Endothelial cell of umbilical vein (primary cell): ENCODE measurements at regions of chr13 and their contacts with region 1.

Region 1: DNA sequence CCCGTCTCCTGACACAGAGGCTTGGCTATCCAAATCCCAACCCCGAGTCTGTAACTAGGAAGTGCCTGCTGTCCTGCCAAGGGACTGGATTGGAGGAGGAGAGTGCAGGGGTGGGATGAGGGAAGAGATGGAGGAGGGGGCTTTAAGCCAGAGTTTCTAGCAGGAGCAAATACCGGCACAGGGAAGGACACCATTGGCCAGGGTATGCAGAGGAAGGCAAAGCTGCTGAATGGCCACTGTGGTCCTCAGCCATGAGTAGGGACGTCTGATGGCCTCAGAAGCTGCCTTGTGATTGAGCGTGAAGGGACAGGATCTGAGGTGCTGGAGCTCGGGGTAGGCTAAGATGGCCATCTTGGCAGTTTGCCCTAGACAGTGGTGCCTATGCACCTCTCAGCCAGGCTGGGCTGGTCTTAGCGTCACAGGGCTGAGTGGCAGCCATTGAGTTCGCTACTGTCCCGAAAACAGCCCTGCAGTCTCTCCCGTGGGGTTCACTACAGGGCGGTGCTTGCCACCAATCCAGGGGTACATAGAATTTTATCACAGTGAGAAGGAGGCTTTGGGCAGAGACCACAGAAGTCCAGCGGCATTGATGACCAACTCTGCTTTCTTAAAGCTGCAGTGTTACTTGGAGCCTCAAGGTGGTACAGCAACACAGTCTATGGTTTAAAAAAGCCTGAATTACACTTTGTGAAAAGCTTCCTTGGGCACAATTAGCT is 61.8 kb downstream of the AKAP11 start:
- DNase-seq: peak; percentile 21
- H3K4me3 ChIP-seq: no peak overlapping the region
- H3K27ac ChIP-seq: no peak overlapping the region
- H3K4me1 ChIP-seq: no peaks in the 10 kb centered on the region
- H3K27me3 ChIP-seq: peaks cover 2 to 3% of the 10 kb centered on the region in 2 experiments
- CTCF ChIP-seq: peak; percentile 25 to 36
- POLR2A ChIP-seq: no peak

Region 2: GRCh38 chr13:42039946-42040729 is 293.6 kb before region 1 on chr13:
- CTCF ChIA-PET with region 1: no interaction called
- POLR2A ChIA-PET with region 1: no interaction called
- dilution Hi-C with region 1: no loop called
- intact Hi-C with region 1: no loop called
- DNase-seq: peak; percentile 83
- H3K4me3 ChIP-seq: peak overlapping the region; percentile 60 to 85 (median 69)
- H3K27ac ChIP-seq: peak overlapping the region; percentile 65
- H3K4me1 ChIP-seq: peaks cover 12% of the 10 kb centered on the region
- H3K27me3 ChIP-seq: no peaks in the 10 kb centered on the region
- CTCF ChIP-seq: no peak
- POLR2A ChIP-seq: peak; percentile 93

Region 3: DNA sequence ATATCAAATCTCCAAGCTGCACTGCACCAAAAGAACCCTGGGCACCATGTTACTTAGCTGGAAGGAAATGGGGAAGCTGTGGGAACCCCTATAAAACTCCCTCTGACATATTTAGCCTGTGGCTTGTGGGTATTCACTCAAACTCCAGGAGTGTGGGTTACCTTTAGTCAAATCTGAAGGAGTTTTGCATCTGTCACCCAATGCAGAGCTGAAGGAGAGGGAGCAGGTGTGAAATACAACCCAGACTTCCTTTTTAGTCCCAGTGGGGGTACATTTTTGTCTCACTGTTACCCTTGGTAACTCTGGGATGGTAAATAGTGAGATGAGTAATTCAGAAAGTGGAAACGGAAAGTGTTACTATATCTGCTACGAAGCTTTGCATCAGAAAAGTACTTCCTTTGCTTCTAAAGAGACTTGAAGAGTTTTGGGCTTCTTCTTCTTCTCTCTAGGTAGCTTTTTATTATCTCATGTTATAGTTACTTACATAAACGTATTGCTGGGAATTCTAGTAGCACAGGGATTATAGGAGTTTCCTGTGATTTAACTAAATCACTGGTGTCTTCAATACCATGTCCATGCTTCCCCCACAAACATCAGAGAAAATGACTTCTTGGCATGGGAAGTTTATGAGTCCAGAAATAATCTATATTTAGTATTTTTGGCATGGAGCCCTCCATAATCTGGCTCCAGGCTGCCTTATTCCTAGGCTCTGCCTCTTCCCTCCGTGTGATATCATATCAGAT is 44.0 kb after region 1 on chr13:
- CTCF ChIA-PET with region 1: no interaction called
- POLR2A ChIA-PET with region 1: no interaction called
- dilution Hi-C with region 1: no loop called
- intact Hi-C with region 1: no loop called
- DNase-seq: no peak
- H3K4me3 ChIP-seq: no peak overlapping the region
- H3K27ac ChIP-seq: no peak overlapping the region
- H3K4me1 ChIP-seq: no peaks in the 10 kb centered on the region
- H3K27me3 ChIP-seq: peaks cover 0 to 7% of the 10 kb centered on the region in 2 experiments
- CTCF ChIP-seq: no peak
- POLR2A ChIP-seq: no peak

Region 4: GRCh38 chr13:42392716-42393572 is 59.2 kb after region 1 on chr13:
- CTCF ChIA-PET with region 1: no interaction called
- POLR2A ChIA-PET with region 1: no interaction called
- dilution Hi-C with region 1: no loop called
- intact Hi-C with region 1: no loop called
- DNase-seq: no peak
- H3K4me3 ChIP-seq: no peak overlapping the region
- H3K27ac ChIP-seq: no peak overlapping the region
- H3K4me1 ChIP-seq: no peaks in the 10 kb centered on the region
- H3K27me3 ChIP-seq: peaks cover 5 to 6% of the 10 kb centered on the region in 2 experiments
- CTCF ChIP-seq: no peak
- POLR2A ChIP-seq: no peak

Region 5: DNA sequence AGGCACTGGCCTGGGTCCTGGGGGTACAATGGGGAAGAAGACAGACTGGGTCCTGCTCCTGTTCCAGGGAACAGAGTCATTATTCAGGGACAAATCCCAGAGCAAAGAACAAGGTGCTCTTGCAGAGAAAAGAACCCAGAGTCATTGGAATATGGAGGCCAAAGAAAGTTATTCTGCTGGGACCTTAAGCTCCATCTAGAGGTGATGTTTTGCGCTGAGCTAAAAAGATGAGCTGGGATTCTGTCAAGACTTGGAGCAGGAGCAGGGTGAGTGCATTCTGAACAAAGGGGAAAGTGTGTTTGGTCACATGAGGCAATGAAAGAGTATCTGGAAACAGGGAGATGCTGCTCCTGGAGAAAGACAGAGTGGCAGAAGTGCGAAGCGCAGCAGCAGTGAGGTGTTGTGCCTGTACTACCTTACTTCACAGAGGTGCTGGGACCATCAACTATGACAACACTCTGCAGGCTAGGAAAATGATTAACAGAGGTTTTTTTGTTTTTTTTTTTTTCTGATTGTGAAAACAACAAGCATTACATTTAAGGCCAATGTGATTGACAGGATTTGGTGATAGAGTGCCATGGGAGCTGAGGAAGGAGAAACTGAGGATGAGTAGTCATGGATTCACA is 144.9 kb after region 1 on chr13:
- CTCF ChIA-PET with region 1: interaction called, 15 read pairs
- POLR2A ChIA-PET with region 1: no interaction called
- dilution Hi-C with region 1: no loop called
- intact Hi-C with region 1: no loop called
- DNase-seq: peak; percentile 26
- H3K4me3 ChIP-seq: no peak overlapping the region
- H3K27ac ChIP-seq: no peak overlapping the region
- H3K4me1 ChIP-seq: peaks cover 4% of the 10 kb centered on the region
- H3K27me3 ChIP-seq: no peaks in the 10 kb centered on the region
- CTCF ChIP-seq: peak; percentile 11 to 23
- POLR2A ChIP-seq: no peak